WTC11 (cell line): ENCODE measurements at regions of chr7 and their contacts with region 1.

Region 1: DNA sequence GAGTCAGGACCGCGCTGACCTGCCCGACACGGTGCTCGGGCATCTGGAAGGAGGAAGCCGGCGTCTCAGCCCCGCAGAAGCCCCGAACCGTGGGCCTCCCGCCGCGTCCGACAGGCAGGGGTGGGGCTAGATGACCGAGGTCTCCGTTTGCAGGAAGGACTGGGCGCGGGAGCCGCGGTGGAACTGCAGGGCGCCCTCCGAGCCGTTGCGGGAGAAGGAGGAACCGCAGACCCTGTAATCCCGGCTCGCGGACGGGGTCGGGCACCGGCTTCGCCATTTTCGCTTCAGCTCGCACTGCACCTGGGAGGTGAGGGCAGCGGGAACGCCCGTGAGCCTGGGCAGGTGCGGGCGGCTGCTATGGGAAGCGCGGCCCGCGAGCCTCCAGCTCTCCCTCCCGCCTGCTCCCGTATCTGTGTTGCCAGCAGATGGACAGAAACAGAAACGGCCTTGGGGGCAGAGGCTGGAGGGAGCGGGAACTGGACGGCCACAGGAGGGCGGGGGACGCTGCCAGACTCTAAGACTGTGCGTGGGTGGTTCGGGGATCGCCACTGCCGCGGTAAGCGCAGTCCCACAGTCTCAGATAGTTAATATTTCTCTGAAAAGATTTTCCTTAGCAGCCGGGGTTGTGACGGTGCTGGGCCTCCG is 114.1 kb downstream of the VIPR2 start:
- DNase-seq: peak; percentile 88
- ATAC-seq: peak; percentile 74
- H3K4me3 Mint-ChIP-seq: peak overlapping the region; percentile 77
- H3K27ac Mint-ChIP-seq: peak overlapping the region; percentile 49
- H3K4me1 Mint-ChIP-seq: peaks cover 26% of the 10 kb centered on the region
- H3K27me3 Mint-ChIP-seq: peaks cover 5% of the 10 kb centered on the region; the same call in 1 of the 2 replicates
- CTCF ChIP-seq: peak; percentile 23; the same call in 1 of the 2 replicates

Region 2: GRCh38 chr7:159000859-159001435 is 29.7 kb before region 1 on chr7:
- CTCF ChIA-PET with region 1: interaction called, 10 read pairs
- POLR2A ChIA-PET with region 1: no interaction called
- DNase-seq: no peak
- ATAC-seq: peak; percentile 91
- H3K4me3 Mint-ChIP-seq: no peak overlapping the region
- H3K27ac Mint-ChIP-seq: no peak overlapping the region
- H3K4me1 Mint-ChIP-seq: peaks cover 11% of the 10 kb centered on the region
- H3K27me3 Mint-ChIP-seq: peaks cover 20% of the 10 kb centered on the region
- CTCF ChIP-seq: no peak

Region 3: DNA sequence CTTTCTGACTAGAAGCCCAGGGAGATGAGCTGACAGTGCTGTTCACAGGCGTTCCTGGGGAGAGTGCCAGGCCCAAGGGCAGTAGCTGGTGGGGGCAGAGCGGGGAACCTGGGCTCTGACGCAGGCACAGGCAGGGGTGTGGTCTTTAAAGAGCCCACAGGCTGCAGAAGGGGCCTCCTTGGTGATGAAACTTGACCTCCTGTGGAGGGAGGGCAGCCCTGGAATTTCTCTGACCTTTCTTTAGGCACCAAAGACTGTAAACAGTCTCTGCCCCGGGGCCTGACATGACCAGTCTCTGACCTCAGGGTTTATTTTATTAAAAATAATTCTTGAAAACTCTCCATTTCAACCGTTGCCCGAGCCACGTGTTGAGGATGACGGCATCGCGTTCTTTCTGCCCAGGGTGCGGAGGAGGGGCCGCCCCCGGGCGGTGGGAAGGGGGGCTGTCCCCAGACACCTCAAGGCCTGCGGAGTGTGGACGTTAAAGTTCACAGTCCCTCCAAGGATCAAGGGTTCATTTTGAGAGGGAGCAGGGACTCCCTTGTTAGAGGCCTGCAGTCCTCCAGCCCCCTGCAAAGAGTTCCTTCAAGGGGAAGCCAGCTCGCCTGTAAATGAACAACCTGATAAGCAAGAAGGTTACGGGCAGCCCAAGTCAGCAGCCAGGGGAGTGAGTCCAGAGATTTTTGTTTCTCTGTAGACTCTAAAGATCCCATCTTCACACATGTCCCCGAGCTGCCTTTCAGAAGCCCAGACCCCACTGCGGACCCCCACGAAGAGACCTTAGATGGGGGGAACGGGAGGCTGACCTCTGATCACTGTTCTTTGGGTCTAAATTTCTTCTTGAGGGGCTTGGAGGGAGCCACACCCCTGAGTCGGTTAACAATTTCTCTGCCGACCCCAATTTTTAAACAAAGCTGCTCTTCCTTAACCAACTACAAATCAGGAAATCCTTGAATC is 14.9 kb before region 1 on chr7:
- CTCF ChIA-PET with region 1: interaction called, 12 read pairs
- POLR2A ChIA-PET with region 1: no interaction called
- DNase-seq: no peak
- ATAC-seq: peak; percentile 72
- H3K4me3 Mint-ChIP-seq: no peak overlapping the region
- H3K27ac Mint-ChIP-seq: no peak overlapping the region
- H3K4me1 Mint-ChIP-seq: peaks cover 20% of the 10 kb centered on the region
- H3K27me3 Mint-ChIP-seq: no peaks in the 10 kb centered on the region
- CTCF ChIP-seq: no peak

Region 4: GRCh38 chr7:159098811-159099655 is 68.4 kb after region 1 on chr7:
- CTCF ChIA-PET with region 1: no interaction called
- POLR2A ChIA-PET with region 1: no interaction called
- DNase-seq: no peak
- ATAC-seq: no peak
- H3K4me3 Mint-ChIP-seq: no peak overlapping the region
- H3K27ac Mint-ChIP-seq: no peak overlapping the region
- H3K4me1 Mint-ChIP-seq: no peaks in the 10 kb centered on the region
- H3K27me3 Mint-ChIP-seq: no peaks in the 10 kb centered on the region; the same call in 1 of the 2 replicates
- CTCF ChIP-seq: no peak

Region 5: GRCh38 chr7:159141660-159142059 is 111.0 kb after region 1 on chr7:
- CTCF ChIA-PET with region 1: interaction called, 10 read pairs
- POLR2A ChIA-PET with region 1: interaction called, 3 read pairs
- DNase-seq: no peak
- ATAC-seq: peak; percentile 28
- H3K4me3 Mint-ChIP-seq: 0 out of 2 replicates have a peak overlapping the region, but pooled peaks have one; percentile 11
- H3K27ac Mint-ChIP-seq: peak overlapping the region; percentile 44
- H3K4me1 Mint-ChIP-seq: peaks cover 47% of the 10 kb centered on the region
- H3K27me3 Mint-ChIP-seq: peaks cover 32% of the 10 kb centered on the region
- CTCF ChIP-seq: no peak

Region 6: DNA sequence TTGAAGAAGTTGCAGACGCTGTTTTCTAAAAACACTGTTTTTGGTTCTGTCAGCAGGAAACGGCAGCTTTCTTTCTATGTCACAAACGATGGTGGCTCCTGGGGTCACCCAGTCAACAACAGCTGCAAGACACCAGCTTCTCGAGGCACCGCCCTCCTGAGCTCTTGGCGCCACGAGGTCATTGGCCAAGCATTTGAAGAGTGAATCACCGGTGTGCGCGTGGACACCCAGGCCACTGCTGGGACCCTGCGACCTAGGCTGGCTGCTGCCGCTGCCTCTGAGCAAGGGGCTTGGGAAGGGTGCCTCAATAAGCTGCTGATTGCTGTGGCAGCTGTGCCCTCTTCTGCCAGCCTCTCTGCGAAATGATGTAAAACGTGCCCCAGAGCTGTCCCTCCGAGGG is 136.5 kb after region 1 on chr7:
- CTCF ChIA-PET with region 1: no interaction called
- POLR2A ChIA-PET with region 1: no interaction called
- DNase-seq: no peak
- ATAC-seq: no peak
- H3K4me3 Mint-ChIP-seq: no peak overlapping the region
- H3K27ac Mint-ChIP-seq: no peak overlapping the region
- H3K4me1 Mint-ChIP-seq: no peaks in the 10 kb centered on the region
- H3K27me3 Mint-ChIP-seq: no peaks in the 10 kb centered on the region
- CTCF ChIP-seq: no peak